Endothelial cell of umbilical vein (primary cell): ENCODE measurements at regions of chr11 and their contacts with region 1.

Region 1: GRCh38 chr11:66727282-66727882 is 1.6 kb downstream of the SPTBN2 start:
- DNase-seq: peak; percentile 27
- H3K4me3 ChIP-seq: peak overlapping the region; percentile 10 to 42 (median 31)
- H3K27ac ChIP-seq: no peak overlapping the region
- H3K4me1 ChIP-seq: peaks cover 4% of the 10 kb centered on the region
- H3K27me3 ChIP-seq: peaks cover 8 to 17% of the 10 kb centered on the region in 2 experiments
- CTCF ChIP-seq: no peak
- POLR2A ChIP-seq: no peak

Region 2: GRCh38 chr11:66744485-66745340 is 17.3 kb after region 1 on chr11:
- CTCF ChIA-PET with region 1: interaction called, 3 read pairs
- POLR2A ChIA-PET with region 1: no interaction called
- dilution Hi-C with region 1: no loop called
- intact Hi-C with region 1: loop called (anchors 2 kb)
- DNase-seq: peak; percentile 84
- H3K4me3 ChIP-seq: peak overlapping the region; percentile 60 to 95 (median 78)
- H3K27ac ChIP-seq: peak overlapping the region; percentile 33
- H3K4me1 ChIP-seq: peaks cover 30% of the 10 kb centered on the region
- H3K27me3 ChIP-seq: no peaks in the 10 kb centered on the region
- CTCF ChIP-seq: no peak
- POLR2A ChIP-seq: peak; percentile 93